Colonic mucosa (tissue), 4 donors: ENCODE measurements at regions of chr2 and their contacts with region 1.

Region 1: GRCh38 chr2:74334931-74335333 is 8.3 kb downstream of the SLC4A5 start:
- DNase-seq: peak; percentile 84
- H3K4me3 ChIP-seq: no peak overlapping the region
- H3K27ac ChIP-seq: no peak overlapping the region
- H3K4me1 ChIP-seq: no peaks in the 10 kb centered on the region
- H3K27me3 ChIP-seq: no peaks in the 10 kb centered on the region
- CTCF ChIP-seq: peak; percentile 96

Region 2: GRCh38 chr2:74221604-74222299 is 113.2 kb before region 1 on chr2:
- intact Hi-C with region 1: no loop called
- DNase-seq: no peak
- H3K4me3 ChIP-seq: no peak overlapping the region
- H3K27ac ChIP-seq: no peak overlapping the region
- H3K4me1 ChIP-seq: no peaks in the 10 kb centered on the region
- H3K27me3 ChIP-seq: no peaks in the 10 kb centered on the region
- CTCF ChIP-seq: no peak

Region 3: DNA sequence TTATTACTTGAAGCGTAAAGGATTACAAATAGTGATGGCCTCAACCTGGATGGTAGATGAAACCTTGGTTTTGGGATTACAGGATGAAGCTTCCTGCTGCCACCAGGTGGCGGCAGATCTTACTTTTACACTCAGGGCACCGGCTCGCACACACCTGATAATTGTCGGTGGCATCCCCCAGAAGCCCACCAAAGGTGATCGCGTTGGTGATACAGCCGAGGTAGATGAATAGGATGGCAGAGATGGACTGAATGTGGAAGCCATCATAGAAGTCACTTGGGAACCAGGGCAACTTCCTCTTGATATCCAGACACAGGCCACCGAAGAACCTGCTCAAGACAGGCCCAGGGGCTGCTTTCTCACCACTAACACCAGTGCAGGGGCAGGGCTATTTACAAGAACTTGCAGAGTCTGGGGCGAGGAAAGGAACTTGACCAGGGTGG is 84.7 kb before region 1 on chr2:
- intact Hi-C with region 1: loop called (anchors 5 kb)
- DNase-seq: peak; percentile 41
- H3K4me3 ChIP-seq: no peak overlapping the region
- H3K27ac ChIP-seq: no peak overlapping the region
- H3K4me1 ChIP-seq: no peaks in the 10 kb centered on the region
- H3K27me3 ChIP-seq: no peaks in the 10 kb centered on the region
- CTCF ChIP-seq: peak; percentile 68

Region 4: DNA sequence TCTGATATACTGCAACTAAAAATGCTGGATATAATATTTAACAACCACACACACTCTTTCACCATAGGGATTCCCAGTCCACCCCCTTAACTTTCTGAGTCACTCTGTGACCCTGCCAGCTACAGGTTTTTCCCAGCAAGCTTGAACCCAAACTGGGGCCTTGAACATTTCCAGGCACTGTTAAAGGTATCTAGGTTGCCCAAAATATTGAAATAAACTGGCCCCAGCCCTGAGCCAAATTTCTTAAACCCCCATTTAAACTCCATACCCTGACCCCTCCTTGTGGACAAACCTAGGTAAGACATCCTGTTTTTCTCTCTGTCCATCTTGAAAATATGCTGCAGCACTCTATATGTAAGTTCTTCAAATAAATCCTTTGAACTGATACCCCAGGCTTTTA is 64.9 kb after region 1 on chr2:
- intact Hi-C with region 1: loop called (anchors 5 kb)
- DNase-seq: no peak
- H3K4me3 ChIP-seq: no peak overlapping the region
- H3K27ac ChIP-seq: no peak overlapping the region
- H3K4me1 ChIP-seq: no peaks in the 10 kb centered on the region
- H3K27me3 ChIP-seq: no peaks in the 10 kb centered on the region
- CTCF ChIP-seq: peak; percentile 53

Region 5: GRCh38 chr2:74429487-74430451 is 94.8 kb after region 1 on chr2:
- intact Hi-C with region 1: no loop called
- DNase-seq: peak; percentile 77
- H3K4me3 ChIP-seq: no peak overlapping the region
- H3K27ac ChIP-seq: peak overlapping the region; percentile 11
- H3K4me1 ChIP-seq: no peaks in the 10 kb centered on the region
- H3K27me3 ChIP-seq: no peaks in the 10 kb centered on the region
- CTCF ChIP-seq: no peak

Region 6: GRCh38 chr2:74632209-74632938 is 297.4 kb after region 1 on chr2:
- intact Hi-C with region 1: no loop called
- DNase-seq: no peak
- H3K4me3 ChIP-seq: no peak overlapping the region
- H3K27ac ChIP-seq: no peak overlapping the region
- H3K4me1 ChIP-seq: no peaks in the 10 kb centered on the region
- H3K27me3 ChIP-seq: no peaks in the 10 kb centered on the region
- CTCF ChIP-seq: no peak